Caco-2 (cell line): ENCODE measurements at regions of chr2 and their contacts with region 1.

Region 1: DNA sequence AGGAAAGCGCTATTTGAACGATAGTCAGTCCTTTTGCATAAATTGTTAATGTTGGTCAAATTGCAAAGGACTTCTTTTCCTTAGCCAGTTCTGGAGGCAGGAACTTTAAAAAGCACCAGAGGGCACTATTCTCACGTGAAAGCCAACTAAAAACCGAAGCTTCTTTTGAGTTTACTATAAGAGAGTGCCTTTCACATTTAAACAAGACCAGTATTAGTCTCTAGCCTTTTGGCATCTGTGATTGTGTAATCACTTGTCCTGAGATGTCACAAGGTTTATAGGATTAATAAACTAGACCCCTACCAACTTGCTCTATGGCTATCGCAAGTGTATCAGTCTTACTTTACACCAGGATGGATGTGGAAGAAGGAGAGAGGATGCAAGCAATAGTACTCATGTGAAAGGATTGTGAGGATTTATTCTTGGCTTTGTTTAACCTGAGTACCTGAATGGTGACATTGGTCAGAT is 14.4 kb upstream of the STAT4 start:
- DNase-seq: peak in 1 of 2 experiments; percentile 40
- H3K4me3 ChIP-seq: no peak overlapping the region
- H3K4me3 Mint-ChIP-seq: no peak overlapping the region
- H3K27ac Mint-ChIP-seq: no peak overlapping the region
- H3K4me1 ChIP-seq: peaks cover 30% of the 10 kb centered on the region
- H3K4me1 Mint-ChIP-seq: peaks cover 24% of the 10 kb centered on the region
- H3K27me3 ChIP-seq: no peaks in the 10 kb centered on the region
- H3K27me3 Mint-ChIP-seq: peaks cover 4% of the 10 kb centered on the region
- CTCF ChIP-seq: peak; percentile 61 to 73

Region 2: DNA sequence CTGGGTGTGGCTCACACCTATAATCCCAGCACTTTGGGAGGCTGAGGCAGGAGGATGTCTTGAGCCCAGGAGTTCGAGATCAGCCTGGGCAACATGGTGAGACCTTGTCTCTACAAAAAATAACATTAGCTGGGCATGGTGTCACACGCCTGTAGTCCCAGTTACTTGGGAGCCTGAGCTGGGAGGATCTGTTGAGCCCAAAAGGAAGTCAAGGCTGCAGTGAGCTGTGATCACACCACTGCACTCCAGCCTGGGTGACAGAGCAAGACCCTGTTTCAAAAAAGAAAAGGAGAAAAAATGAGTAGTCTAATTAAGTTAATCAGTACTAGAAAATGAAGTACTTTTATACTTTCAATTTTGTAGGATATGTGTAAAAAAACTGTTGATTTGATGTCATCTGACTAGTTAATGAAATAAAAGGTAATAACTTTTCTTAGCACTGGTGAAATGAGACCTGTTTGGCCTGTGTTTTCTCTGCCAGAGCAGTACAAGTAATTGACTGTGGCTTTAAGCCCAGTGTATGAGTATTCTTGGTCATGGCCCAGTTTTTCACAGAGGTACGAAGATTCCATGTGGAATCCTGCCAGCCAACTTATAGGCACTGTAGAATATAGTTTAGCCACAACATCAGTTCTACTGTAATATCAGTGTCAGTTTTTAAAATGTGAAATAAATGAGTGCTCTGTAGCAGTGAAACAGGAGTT is 721.3 kb before region 1 on chr2:
- CTCF ChIA-PET with region 1: no interaction called
- POLR2A ChIA-PET with region 1: no interaction called
- intact Hi-C with region 1: no loop called
- DNase-seq: no peak
- H3K4me3 ChIP-seq: no peak overlapping the region
- H3K4me3 Mint-ChIP-seq: no peak overlapping the region
- H3K27ac Mint-ChIP-seq: no peak overlapping the region
- H3K4me1 ChIP-seq: no peaks in the 10 kb centered on the region
- H3K4me1 Mint-ChIP-seq: no peaks in the 10 kb centered on the region
- H3K27me3 ChIP-seq: no peaks in the 10 kb centered on the region
- H3K27me3 Mint-ChIP-seq: no peaks in the 10 kb centered on the region
- CTCF ChIP-seq: no peak

Region 3: DNA sequence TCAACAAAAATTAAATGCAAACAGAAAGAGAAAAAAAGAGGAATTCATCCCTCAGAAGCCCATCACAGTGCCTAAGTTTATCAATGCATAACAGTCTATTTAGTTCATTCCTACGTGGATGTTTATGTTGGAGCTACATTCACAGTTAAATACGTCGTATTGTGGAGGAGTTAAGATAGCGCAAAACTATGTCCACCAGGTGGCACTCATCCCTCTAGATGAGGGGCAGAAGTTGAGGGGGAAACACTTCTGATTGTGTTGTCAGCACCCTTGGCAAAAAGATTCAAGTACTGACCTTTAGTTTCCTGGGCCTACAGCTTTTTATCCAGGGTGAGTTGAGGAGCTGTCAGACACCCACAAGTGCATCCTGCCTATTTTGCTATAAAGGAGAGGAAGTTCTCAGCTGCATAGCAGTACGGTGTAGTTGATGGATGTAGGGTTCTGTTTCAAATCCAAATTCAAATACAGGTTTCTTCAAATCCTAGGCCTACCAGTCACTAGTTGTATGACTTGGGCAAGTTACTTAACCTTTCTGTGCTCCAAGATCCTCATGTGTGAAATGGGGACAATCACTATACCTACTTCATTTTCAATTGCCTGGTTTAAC is 53.2 kb after region 1 on chr2:
- CTCF ChIA-PET with region 1: interaction called, 15 read pairs
- POLR2A ChIA-PET with region 1: no interaction called
- intact Hi-C with region 1: loop called (anchors 1 kb)
- DNase-seq: peak; percentile 63 to 65
- H3K4me3 ChIP-seq: no peak overlapping the region
- H3K4me3 Mint-ChIP-seq: no peak overlapping the region
- H3K27ac Mint-ChIP-seq: no peak overlapping the region
- H3K4me1 ChIP-seq: peaks cover 27% of the 10 kb centered on the region
- H3K4me1 Mint-ChIP-seq: peaks cover 15% of the 10 kb centered on the region
- H3K27me3 ChIP-seq: no peaks in the 10 kb centered on the region
- H3K27me3 Mint-ChIP-seq: no peaks in the 10 kb centered on the region
- CTCF ChIP-seq: peak; percentile 55 to 61

Region 4: DNA sequence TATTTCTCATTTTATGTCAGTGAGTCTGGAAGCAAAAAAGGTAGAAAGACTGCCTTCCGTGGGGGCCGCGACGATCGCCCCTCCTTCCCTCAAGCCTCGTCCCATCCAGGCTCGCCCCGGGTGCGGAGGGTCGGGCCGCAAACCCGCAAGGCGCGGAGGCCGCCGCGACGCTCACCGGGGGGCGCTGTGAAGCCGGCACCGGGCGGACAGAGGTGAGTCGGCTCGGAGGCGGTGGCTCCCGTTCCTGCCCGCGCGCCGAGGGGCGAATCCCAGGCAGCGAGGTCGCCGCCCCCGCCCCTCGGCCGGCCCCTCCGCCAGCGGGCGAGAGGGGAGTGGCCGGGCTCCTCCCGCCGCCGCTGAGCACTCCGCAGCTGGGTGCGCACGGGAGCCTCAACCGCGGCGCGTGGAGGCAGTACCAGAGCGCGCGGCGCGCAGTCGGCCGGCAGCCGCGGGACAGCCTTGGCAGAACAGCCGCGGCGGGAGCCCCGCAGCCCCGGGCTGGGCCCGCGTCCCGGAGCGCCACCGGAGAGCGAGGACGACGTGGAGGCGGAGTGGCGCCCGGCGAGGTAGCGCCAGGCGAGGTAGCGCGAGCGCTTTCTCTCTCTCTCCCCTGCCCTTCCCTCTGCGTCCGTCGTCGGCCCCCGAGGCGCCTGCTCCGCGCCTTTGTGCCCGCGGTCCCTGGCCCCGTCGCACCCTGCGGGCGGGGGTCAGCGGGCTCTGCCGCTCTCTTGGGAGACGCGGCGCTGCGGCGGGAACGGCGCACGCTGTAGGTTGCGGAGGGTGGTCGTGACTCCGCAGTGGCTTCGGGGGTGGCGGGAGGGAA is 80.0 kb after region 1 on chr2 and contains the start of gene MYO1B:
- CTCF ChIA-PET with region 1: no interaction called
- POLR2A ChIA-PET with region 1: no interaction called
- intact Hi-C with region 1: loop called (anchors 1 kb)
- DNase-seq: peak; percentile 89 to 96
- H3K4me3 ChIP-seq: peak within 1 kb of the TSS; percentile 85
- H3K4me3 Mint-ChIP-seq: peak within 1 kb of the TSS; percentile 94
- H3K27ac Mint-ChIP-seq: peak within 1 kb of the TSS; percentile 86
- H3K4me1 ChIP-seq: peaks cover 29% of the 10 kb centered on the region
- H3K4me1 Mint-ChIP-seq: peaks cover 27% of the 10 kb centered on the region
- H3K27me3 ChIP-seq: no peaks in the 10 kb centered on the region
- H3K27me3 Mint-ChIP-seq: no peaks in the 10 kb centered on the region
- CTCF ChIP-seq: peak; percentile 66 to 78
- total RNA-seq, gene MYO1B: 80.3 and 83.4 TPM in 2 replicates

Region 5: DNA sequence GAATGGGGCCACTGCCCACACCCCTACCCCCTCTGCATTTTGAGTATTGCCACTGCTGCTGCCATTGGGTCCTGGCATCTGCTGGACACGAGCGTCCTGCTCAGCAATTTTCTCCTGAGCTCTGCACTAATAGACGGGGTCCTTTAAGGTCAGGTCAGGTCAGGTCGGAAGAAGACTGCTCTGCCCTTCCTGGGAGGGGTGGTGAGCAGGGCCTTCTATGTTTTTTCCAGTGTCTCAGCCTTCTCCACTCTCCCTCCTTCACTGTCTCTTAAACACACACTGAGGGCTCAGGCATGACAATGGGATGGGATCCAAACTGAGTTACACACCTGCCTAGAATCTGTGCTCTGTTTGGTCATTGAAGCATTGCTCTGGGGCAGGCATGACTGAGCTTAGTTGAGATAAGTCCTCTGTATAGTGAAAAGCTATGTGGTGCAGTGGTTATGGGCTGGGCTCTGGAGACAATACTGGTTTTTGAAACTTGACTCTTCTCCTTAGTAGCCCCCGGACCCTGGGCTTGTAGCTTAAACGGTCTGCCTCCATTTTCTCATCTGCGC is 90.6 kb after region 1 on chr2:
- CTCF ChIA-PET with region 1: no interaction called
- POLR2A ChIA-PET with region 1: no interaction called
- intact Hi-C with region 1: no loop called
- DNase-seq: no peak
- H3K4me3 ChIP-seq: no peak overlapping the region
- H3K4me3 Mint-ChIP-seq: no peak overlapping the region
- H3K27ac Mint-ChIP-seq: no peak overlapping the region
- H3K4me1 ChIP-seq: peaks cover 30% of the 10 kb centered on the region
- H3K4me1 Mint-ChIP-seq: peaks cover 32% of the 10 kb centered on the region
- H3K27me3 ChIP-seq: no peaks in the 10 kb centered on the region
- H3K27me3 Mint-ChIP-seq: no peaks in the 10 kb centered on the region
- CTCF ChIP-seq: no peak

Region 6: DNA sequence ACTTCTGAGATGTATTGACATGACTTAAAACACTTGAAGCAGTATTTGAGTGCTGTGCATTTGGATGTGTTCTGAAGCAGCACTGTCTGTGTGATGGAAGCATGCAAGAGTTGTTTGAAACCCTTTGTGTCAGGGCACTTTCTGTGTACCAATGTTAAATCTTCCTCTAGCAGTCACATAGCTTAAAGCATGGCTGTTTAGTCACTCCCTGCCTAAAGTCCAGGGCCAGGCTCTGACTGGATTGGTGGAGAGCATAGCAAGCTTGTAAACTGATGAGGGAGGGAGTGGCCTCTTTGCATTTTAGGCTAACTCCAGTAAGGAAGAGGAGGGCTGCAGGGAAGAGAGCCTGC is 153.5 kb after region 1 on chr2:
- CTCF ChIA-PET with region 1: interaction called, 3 read pairs
- POLR2A ChIA-PET with region 1: interaction called, 3 read pairs
- intact Hi-C with region 1: loop called (anchors 5 kb)
- DNase-seq: peak; percentile 85 to 92
- H3K4me3 ChIP-seq: no peak overlapping the region
- H3K4me3 Mint-ChIP-seq: peak overlapping the region; percentile 60
- H3K27ac Mint-ChIP-seq: peak overlapping the region; percentile 78
- H3K4me1 ChIP-seq: peaks cover 48% of the 10 kb centered on the region
- H3K4me1 Mint-ChIP-seq: peaks cover 35% of the 10 kb centered on the region
- H3K27me3 ChIP-seq: no peaks in the 10 kb centered on the region
- H3K27me3 Mint-ChIP-seq: no peaks in the 10 kb centered on the region
- CTCF ChIP-seq: no peak

Region 7: GRCh38 chr2:191417746-191418145 is 252.5 kb after region 1 on chr2:
- CTCF ChIA-PET with region 1: no interaction called
- POLR2A ChIA-PET with region 1: no interaction called
- intact Hi-C with region 1: loop called (anchors 1 kb)
- DNase-seq: no peak
- H3K4me3 ChIP-seq: no peak overlapping the region
- H3K4me3 Mint-ChIP-seq: no peak overlapping the region
- H3K27ac Mint-ChIP-seq: peak overlapping the region; percentile 23
- H3K4me1 ChIP-seq: peaks cover 20% of the 10 kb centered on the region
- H3K4me1 Mint-ChIP-seq: peaks cover 13% of the 10 kb centered on the region
- H3K27me3 ChIP-seq: no peaks in the 10 kb centered on the region
- H3K27me3 Mint-ChIP-seq: no peaks in the 10 kb centered on the region
- CTCF ChIP-seq: no peak